H1 (cell line): ENCODE measurements at regions of chr9 and their contacts with region 1.

Region 1: DNA sequence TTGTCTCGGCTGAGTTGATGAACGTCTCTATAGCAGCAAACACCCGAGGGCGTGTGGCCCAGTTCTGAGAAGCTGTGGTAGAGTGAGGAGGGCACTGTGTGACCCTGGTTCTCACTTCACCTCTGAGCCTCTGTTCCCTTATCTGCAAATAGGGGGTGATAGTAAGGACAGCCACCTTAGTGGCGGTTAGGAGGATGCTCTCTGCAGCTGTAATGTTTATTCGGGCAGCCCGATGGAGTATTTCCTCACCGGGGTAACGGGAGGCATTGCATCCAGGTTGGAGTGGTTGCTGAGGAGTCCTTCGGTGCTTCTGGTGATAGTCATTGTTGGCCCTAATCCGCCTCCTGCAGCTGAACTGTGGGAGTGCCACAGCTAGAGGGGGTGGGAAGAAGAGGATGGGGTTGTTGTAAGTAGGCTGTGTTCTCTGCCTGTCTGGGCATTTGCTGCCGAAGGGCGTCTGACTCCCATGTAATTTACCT is 13.9 kb downstream of the PRRC2B start:
- DNase-seq: peak in 1 of 2 experiments; percentile 65
- H3K4me3 ChIP-seq: peak overlapping the region in 3 of 4 experiments; percentile 6 to 44 (median 11); a peak in 4 of 8 replicates
- H3K27ac ChIP-seq: peak overlapping the region; percentile 59; the same call in 1 of the 2 replicates
- H3K4me1 ChIP-seq: peaks cover 40 to 61% (median 47%) of the 10 kb centered on the region in 4 experiments
- H3K27me3 ChIP-seq: no peaks in the 10 kb centered on the region
- CTCF ChIP-seq: peak; percentile 59 to 64 (median 63)
- EP300 ChIP-seq: no peak
- POLR2A ChIP-seq: peak in 1 of 2 experiments; percentile 33; a peak in 1 of 3 replicates
- RAD21 ChIP-seq: peak; percentile 58 to 72

Region 2: GRCh38 chr9:131270171-131271015 is 137.4 kb before region 1 on chr9:
- CTCF ChIA-PET with region 1: no interaction called
- POLR2A ChIA-PET with region 1: no interaction called
- DNase-seq: no peak
- H3K4me3 ChIP-seq: no peak overlapping the region
- H3K27ac ChIP-seq: no peak overlapping the region; the same call in 1 of the 2 replicates
- H3K4me1 ChIP-seq: peaks cover 3 to 11% (median 7%) of the 10 kb centered on the region in 4 experiments; a peak in 5 of 7 replicates
- H3K27me3 ChIP-seq: peaks cover 0 to 2% (median under 1%) of the 10 kb centered on the region in 4 experiments; a peak in 2 of 7 replicates
- CTCF ChIP-seq: no peak
- EP300 ChIP-seq: no peak
- POLR2A ChIP-seq: no peak
- RAD21 ChIP-seq: no peak

Region 3: DNA sequence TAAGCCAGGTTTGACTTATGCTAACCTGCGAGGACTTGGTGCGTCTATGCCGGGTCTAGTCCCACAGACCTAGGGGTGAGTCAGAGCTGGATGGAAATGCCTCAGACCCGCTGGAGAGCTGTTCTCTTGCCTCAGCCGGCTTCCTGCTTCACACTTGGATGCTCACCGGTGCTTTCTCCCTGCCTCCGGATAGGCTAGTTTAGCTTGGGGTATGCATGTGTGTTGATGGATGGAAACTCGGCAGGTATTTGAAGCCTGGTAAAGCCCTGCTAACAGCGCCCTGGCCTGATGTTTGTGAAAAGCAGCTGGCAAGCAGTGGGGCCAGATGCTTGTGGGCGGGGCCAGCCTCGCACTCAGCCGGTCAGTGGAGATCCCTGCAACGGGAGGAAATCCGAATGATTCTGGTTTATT is 15.4 kb after region 1 on chr9:
- CTCF ChIA-PET with region 1: interaction called, 25 read pairs
- POLR2A ChIA-PET with region 1: interaction called, 26 read pairs
- DNase-seq: peak in 1 of 2 experiments; percentile 53
- H3K4me3 ChIP-seq: peak overlapping the region in 1 of 4 experiments; percentile 19; a peak in 1 of 8 replicates
- H3K27ac ChIP-seq: no peak overlapping the region
- H3K4me1 ChIP-seq: peaks cover 21 to 39% (median 35%) of the 10 kb centered on the region in 4 experiments
- H3K27me3 ChIP-seq: no peaks in the 10 kb centered on the region
- CTCF ChIP-seq: no peak
- EP300 ChIP-seq: no peak
- POLR2A ChIP-seq: peak in 1 of 2 experiments; percentile 59; a peak in 1 of 3 replicates
- RAD21 ChIP-seq: no peak

Region 4: GRCh38 chr9:131432597-131433306 is 25.0 kb after region 1 on chr9:
- CTCF ChIA-PET with region 1: interaction called, 25 read pairs
- POLR2A ChIA-PET with region 1: interaction called, 24 read pairs
- DNase-seq: no peak
- H3K4me3 ChIP-seq: no peak overlapping the region
- H3K27ac ChIP-seq: no peak overlapping the region
- H3K4me1 ChIP-seq: peaks cover 21 to 39% (median 22%) of the 10 kb centered on the region in 4 experiments
- H3K27me3 ChIP-seq: no peaks in the 10 kb centered on the region
- CTCF ChIP-seq: no peak
- EP300 ChIP-seq: no peak
- POLR2A ChIP-seq: 0 out of 3 replicates have a peak, but pooled peaks of 1 of the 2 experiments have one; percentile 44
- RAD21 ChIP-seq: no peak